Activated naive CD4-positive, alpha-beta T cell treated with anti-CD3 and anti-CD28 coated beads, Interleukin-2, amount 10 ng/mL, durations not matched to agents 7 days and 5 days (primary cell): ENCODE measurements at regions of chr3 and their contacts with region 1.

Region 1: DNA sequence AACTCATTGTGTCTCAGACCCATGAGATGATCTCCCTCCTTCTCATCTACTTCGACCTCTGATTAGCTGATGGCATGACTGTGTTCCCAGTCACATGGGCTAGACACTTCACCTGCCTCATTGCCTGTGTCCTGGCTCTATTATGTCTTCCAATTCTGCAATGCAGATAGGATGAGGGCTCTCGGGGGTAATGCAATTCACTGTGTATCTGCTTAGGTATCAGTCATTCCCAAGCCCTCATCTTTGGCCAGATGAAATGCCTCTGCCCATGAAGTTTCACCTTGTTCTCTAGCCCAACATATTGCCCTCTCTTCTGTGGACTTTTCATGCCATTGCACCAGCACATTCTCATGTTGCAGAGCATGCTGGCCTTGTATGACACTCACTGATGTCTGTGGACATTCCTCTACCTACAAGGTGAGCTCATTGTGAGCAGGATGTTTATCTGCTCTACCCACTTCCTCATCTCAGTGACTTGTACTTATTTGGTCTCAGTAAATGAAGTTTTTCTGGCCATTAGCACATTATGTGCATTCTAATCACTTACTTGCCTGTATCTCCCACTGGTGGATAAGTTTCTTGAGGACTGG is 32.3 kb downstream of the MOBP start:
- DNase-seq: no peak
- H3K4me3 Mint-ChIP-seq: no peak overlapping the region
- H3K27ac Mint-ChIP-seq: no peak overlapping the region
- H3K4me1 Mint-ChIP-seq: peaks cover 10% of the 10 kb centered on the region
- H3K27me3 Mint-ChIP-seq: peaks cover 48% of the 10 kb centered on the region

Region 2: GRCh38 chr3:38969317-38970235 is 530.2 kb before region 1 on chr3:
- CTCF ChIA-PET with region 1: no interaction called
- DNase-seq: no peak
- H3K4me3 Mint-ChIP-seq: no peak overlapping the region
- H3K27ac Mint-ChIP-seq: no peak overlapping the region
- H3K4me1 Mint-ChIP-seq: no peaks in the 10 kb centered on the region
- H3K27me3 Mint-ChIP-seq: peaks cover 33% of the 10 kb centered on the region

Region 3: DNA sequence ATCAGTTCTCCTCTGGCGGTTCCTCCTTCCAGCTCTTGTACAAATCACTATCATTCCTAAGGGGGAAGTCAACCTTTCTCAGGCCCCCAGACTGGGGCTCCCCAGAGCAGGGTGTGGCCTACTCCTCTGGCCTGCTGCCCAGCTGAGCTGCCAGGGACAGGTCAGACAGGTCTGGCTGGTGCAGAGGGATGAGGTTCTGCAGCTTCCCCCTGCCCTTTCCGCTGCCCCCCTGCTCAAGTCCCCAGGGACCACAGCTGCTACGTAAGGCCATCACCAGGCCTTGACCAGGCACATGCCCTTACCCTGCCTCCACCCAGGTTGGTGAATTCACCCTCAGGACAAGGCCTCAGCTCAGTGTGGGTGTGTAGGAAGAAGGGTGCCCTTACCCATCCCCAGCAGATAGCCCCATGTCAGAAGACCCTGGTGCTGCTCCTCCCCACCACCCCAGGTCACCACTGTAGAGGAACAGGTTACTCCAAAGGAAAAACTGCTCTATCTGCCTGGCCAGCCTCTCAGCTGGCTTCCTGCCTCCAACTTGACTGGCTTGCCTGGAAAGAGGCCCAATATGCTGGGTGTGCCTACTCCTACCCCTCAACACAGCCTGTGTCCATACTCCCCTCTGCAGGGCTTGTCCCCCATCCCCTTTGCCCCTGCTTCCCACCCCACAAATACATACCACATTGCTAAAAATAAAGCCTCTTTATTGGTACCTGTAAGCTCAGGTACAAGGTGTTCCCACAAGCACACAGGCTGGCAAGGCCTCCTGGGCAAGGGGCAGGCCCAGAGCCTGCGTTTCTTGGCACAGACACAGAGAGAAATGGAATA is 358.4 kb before region 1 on chr3:
- CTCF ChIA-PET with region 1: no interaction called
- DNase-seq: no peak
- H3K4me3 Mint-ChIP-seq: no peak overlapping the region
- H3K27ac Mint-ChIP-seq: peak overlapping the region; percentile 68
- H3K4me1 Mint-ChIP-seq: peaks cover 29% of the 10 kb centered on the region
- H3K27me3 Mint-ChIP-seq: no peaks in the 10 kb centered on the region

Region 4: DNA sequence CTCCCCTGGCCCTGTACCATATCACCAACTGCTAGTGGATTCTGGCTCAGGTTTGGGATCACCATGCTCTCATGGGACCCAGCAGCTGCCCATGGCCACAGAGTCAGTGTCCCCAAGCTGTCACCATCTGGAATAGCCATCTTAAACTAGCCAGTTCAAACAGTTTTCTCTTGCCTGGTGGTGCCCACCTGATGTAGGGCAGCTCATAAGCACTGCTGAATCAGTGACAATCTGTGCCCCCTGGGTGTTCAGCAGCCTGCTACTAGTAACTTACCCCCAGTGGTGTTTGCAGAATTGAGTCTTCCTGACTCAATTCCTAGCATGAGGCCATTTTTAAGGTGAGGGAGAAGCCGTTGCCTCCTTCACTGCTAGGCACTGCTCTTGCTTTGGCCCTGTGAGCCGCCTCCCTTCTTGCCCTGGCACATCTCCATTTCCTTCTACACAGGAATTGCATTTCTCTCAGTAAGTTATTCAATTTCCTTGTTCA is 85.3 kb before region 1 on chr3:
- CTCF ChIA-PET with region 1: interaction called, 13 read pairs
- DNase-seq: no peak
- H3K4me3 Mint-ChIP-seq: no peak overlapping the region
- H3K27ac Mint-ChIP-seq: no peak overlapping the region
- H3K4me1 Mint-ChIP-seq: peaks cover 20% of the 10 kb centered on the region
- H3K27me3 Mint-ChIP-seq: peaks cover 12% of the 10 kb centered on the region

Region 5: GRCh38 chr3:39460677-39461076 is 39.1 kb before region 1 on chr3:
- CTCF ChIA-PET with region 1: no interaction called
- DNase-seq: no peak
- H3K4me3 Mint-ChIP-seq: no peak overlapping the region
- H3K27ac Mint-ChIP-seq: no peak overlapping the region
- H3K4me1 Mint-ChIP-seq: no peaks in the 10 kb centered on the region
- H3K27me3 Mint-ChIP-seq: peaks cover 21% of the 10 kb centered on the region